ENCODE measurements at regions of chr1 and their contacts with region 1.

Region 1: DNA sequence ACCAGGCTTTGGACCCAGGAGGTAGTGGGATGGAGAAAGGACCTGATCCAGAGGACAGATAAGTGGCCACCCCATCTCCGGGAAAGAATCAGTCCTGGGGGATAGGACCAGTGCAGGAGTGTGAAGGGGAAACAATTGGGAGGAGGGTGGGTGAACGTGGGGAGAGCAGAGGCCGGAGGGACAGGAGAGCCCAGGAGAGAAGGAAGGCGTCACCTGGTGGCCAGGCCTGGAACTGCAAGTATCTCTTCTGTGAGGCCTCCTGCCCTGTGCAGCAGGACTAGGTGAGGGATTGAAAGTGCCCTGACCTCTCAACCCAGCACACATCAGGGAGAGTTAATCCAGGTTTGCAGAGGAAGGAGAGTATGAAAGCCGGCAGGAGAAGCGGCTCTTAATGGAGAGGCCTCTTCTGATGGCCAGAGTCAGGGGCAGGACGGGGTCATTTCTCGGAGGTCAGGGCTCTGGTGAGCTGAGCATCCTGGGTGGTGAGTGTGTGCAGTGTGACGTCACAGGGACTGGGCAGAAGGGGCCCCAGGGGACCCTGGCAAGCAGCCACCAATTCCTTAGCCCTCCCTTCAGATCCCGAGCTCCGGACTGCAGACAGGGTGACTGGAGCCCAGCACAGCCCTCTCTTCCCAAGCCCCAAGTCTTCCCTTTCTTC is 9.2 kb upstream of the LAD1 start:
- DNase-seq: peak; percentile 80
- ATAC-seq: peak; percentile 79 to 88

Region 2: DNA sequence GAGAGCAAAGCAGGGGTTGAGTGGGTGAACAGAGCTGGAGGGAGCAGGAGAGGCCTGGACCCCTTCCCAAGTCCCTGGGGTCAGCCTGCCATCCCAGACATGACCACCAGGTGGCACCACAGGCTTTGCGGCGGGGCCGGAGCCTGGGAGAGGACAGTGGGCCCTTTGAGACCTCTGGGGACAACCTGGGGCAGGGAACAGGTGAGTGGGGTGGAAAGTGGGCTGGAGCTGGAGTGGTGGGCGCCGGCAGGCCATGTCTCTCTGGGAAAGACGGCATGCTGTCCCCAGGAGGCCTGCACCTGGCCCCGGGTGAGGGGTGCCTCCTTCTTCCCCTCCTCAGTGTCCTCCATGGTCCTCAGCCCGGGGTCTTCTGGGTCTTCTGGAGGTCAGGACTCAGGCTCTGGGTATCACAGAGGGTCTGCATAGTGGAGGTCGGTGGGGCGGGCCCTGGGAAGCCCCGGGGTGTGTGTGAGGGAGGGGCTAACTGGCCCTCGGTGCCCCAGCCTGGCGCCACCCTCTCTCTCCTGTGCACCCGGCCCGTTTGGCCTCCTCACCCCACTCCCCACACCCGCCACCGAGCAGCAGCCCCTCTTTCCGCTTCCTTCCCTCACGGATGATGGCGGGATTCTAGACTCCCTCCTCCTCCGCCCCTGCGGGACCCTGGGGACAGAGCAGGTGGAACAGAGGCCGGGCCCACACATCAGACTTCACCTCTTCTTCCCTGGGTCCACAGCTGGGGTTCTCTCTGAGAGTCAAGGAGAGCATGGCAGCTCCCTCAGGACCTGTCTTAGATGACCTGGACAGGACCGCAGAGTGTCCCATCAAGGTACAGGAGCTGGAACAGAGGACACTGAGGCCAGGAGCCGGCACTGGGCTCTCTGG is 153.4 kb before region 1 on chr1:
- intact Hi-C with region 1: loop called in 1 of 2 experiments (anchors 5 kb)
- DNase-seq: peak; percentile 57
- ATAC-seq: peak; percentile 67 to 77

Region 3: DNA sequence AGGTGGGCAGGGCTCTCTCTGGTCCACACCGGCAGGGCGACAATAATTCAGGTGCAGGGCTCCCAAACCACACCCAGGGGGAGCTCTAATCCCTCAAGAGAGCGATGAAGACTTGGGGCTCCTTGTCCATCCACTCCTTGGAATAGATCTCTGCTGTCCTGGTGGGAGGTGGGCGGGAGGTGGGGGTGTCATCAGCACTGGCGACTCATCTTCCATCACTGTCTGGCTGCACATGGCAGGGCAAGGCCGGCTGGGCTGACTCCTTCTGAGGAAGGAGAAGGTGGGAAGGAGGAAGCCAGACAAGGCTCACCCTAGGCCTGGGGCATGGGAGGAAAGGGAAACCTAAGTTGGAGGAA is 60.1 kb before region 1 on chr1:
- intact Hi-C with region 1: loop called in 1 of 2 experiments (anchors 5 kb)
- DNase-seq: peak; percentile 8
- ATAC-seq: peak in 1 of 2 donors; percentile 59

Measured in left cardiac atrium (tissue), 4 donors.